ENCODE measurements at regions of chr19 and their contacts with region 1.

Region 1: DNA sequence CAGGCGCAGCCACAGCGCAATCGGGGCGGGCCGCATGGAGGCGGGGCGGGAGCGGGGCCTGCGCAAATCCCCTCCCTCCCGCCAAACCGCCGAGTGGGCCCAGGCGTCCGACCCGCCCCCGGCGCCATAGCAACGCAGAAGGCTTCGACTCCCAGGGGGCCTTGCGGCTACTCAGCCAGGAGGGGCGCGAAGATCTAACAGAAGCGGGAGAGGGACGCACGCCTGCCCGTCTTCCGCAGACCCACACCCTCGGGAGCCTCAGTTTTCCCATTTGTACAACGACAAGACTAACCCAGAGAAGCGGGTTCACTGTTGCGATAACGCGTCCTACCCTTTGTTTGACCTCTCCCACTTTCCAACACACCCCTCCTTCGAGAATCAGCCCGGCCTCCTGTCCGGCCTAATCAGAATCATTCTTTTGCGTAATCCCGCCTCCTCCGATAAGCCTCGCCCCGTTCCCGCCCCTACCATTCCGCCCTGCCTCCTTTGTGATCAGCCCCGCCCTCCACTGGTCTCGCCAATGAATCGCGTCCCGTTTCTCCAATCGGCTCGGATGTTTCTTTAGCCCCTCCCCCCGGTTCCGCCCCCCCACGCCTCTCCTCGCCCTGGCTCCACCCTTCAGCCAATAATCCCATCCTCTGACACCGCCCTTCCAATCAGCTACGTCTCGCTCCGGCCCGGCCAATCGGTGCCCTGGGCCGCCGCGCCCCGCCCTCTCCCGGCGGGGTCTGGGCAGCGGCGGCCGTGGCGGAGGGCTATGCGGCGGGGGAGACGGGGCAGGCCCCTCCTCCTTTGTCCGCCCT is at the start of gene PCSK4:
- DNase-seq: peak; percentile 84 to 99 (median 98)
- ATAC-seq: peak; percentile 93
- H3K4me3 ChIP-seq: peak within 1 kb of the TSS; percentile 77
- H3K4me3 Mint-ChIP-seq: peak within 1 kb of the TSS; percentile 83 to 94 (median 92)
- H3K27ac ChIP-seq: peak within 1 kb of the TSS; percentile 63
- H3K27ac Mint-ChIP-seq: peak within 1 kb of the TSS; percentile 83 to 96 (median 86)
- H3K4me1 ChIP-seq: peaks cover 9 to 10% of the 10 kb centered on the region in 2 donors
- H3K4me1 Mint-ChIP-seq: peaks cover 7 to 17% (median 15%) of the 10 kb centered on the region in 7 donors
- H3K27me3 ChIP-seq: no peaks in the 10 kb centered on the region
- H3K27me3 Mint-ChIP-seq: peaks cover 0 to 14% (median 0%) of the 10 kb centered on the region in 5 donors
- total RNA-seq, gene PCSK4: 0.87 to 10.8 (median 7.8) TPM

Region 2: DNA sequence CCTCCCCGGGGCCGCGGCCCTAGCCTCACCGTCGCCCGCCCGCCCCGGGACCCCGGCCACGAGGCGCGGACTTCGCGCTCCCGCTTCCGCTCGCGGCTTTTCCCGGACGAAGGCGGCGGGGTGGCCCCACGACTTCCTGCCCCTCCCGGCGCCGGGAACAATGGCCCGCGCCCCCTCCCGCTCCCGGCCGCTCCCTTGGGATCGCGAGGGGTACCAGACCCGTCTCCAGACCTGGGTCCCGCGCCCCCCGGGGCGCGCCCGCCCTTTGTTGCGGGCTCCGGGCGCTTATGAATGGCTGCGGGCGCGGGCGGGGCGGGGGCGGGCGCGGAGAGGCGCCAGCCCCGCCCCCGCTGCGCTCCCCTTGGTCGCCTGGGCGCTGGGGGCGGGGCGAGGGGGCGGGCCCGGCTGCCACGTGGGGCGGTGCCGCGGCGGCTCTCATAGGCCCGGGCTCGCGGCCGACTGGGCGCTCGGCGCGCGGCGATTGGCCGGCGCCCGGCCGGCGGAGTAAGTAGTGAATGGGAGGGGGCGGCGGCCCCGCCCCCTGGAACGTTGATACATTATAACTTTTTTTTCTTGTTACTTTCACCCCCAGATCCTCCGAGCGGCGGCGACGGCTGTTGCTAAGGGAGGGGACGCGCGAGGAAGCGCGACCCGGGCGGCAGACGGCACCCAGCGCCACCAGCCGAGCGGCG is 241.1 kb before region 1 on chr19:
- CTCF ChIA-PET with region 1: no interaction called
- POLR2A ChIA-PET with region 1: no interaction called
- intact Hi-C with region 1: loop called in 1 of 2 experiments (anchors 2 kb)
- DNase-seq: peak; percentile 88 to 97 (median 94)
- ATAC-seq: peak; percentile 74
- H3K4me3 ChIP-seq: peak overlapping the region; percentile 63
- H3K4me3 Mint-ChIP-seq: peak overlapping the region; percentile 80 to 95 (median 88)
- H3K27ac ChIP-seq: peak overlapping the region; percentile 94
- H3K27ac Mint-ChIP-seq: peak overlapping the region; percentile 62 to 95 (median 89)
- H3K4me1 ChIP-seq: peaks cover 22 to 27% of the 10 kb centered on the region in 2 donors
- H3K4me1 Mint-ChIP-seq: peaks cover 0 to 11% (median 10%) of the 10 kb centered on the region in 7 donors
- H3K27me3 ChIP-seq: no peaks in the 10 kb centered on the region
- H3K27me3 Mint-ChIP-seq: no peaks in the 10 kb centered on the region

Region 3: DNA sequence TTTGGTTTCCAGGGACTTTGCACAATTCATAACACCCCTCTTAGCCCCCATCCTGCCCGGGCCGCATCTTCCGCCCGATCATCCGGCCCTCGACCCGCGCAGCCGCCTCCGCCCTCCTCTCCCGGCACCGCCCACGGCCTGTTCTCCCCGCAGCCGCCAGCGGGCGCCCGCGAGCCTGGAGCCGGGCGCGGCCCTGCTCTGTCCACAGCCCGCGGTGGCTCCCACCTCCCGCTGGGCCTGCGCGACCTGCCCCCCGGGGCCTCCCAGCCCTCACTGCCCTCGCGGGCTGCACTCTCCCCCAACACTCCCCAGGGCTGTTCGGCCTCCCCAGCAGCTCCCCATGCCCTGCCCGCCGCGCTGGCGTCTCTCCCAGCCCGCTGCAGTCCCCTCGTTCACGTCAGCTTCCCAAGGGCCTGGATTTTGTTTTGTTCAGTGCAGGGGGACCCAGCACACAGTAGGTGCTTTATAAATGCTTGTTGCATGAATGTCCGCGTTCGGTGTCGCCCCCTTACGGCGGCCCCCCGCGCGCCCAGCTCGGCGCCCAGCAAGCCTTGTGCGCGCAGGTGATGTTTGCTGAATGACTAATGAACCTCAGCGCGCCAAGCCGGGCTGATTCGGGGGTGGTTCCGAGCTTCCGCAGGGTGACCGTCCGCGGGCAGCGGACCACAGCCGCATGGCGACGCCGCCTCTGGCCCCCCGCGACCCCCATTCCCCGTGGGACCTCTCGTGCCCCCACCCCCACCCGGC is 45.2 kb before region 1 on chr19:
- CTCF ChIA-PET with region 1: interaction called, 3 read pairs
- POLR2A ChIA-PET with region 1: no interaction called
- intact Hi-C with region 1: loop called in 1 of 2 experiments (anchors 1 kb)
- DNase-seq: peak; percentile 48 to 88 (median 71)
- ATAC-seq: peak; percentile 94
- H3K4me3 ChIP-seq: peak overlapping the region; percentile 50
- H3K4me3 Mint-ChIP-seq: peak overlapping the region; percentile 34 to 78 (median 64)
- H3K27ac ChIP-seq: no peak overlapping the region
- H3K27ac Mint-ChIP-seq: peak overlapping the region in 1 of 9 donors; percentile 5
- H3K4me1 ChIP-seq: peaks cover 5 to 9% of the 10 kb centered on the region in 2 donors
- H3K4me1 Mint-ChIP-seq: peaks cover 9 to 30% (median 15%) of the 10 kb centered on the region in 7 donors
- H3K27me3 ChIP-seq: peaks cover 12 to 27% of the 10 kb centered on the region in 2 donors
- H3K27me3 Mint-ChIP-seq: peaks cover 22 to 32% (median 25%) of the 10 kb centered on the region in 5 donors

Region 4: DNA sequence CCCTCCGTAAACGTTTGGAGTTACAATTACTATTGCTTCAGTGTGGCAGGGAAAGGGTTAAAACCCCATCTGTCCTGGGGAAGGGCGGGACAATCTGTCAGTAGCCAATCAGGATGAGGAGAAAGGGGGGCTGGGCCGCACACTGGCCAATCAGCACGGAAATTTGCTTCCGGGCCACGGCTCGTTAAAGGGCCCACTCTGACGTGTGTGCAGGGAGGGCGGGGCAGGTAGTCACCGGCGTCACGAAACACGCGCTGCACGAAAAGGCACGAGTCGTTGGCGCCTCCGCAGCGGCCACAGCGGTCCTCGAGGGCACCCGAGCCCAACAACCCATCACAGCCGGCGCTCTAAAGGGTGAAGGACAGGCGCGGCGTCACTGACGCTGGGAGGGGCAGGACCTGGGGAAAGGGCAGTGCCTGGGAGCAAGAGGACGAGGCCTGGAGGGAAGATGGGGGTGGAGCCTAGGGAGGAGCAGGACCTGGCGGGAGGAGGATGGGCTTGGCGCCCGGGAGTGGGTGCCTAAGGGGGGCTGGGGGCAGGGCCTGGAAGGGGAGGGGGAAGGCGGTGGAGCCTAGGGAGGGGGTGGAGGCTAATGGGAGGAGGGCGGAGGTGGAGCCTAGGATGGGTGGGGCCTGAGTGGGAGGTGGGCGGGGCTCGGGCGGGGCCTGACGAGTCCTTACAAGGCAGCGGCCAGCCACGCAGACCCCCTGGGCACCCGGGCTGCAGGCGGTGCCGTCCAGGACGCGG is 17.4 kb after region 1 on chr19:
- CTCF ChIA-PET with region 1: interaction called, 3 read pairs
- POLR2A ChIA-PET with region 1: interaction called, 3 read pairs
- intact Hi-C with region 1: loop called (anchors 1 kb)
- DNase-seq: peak; percentile 76 to 96 (median 94)
- ATAC-seq: peak; percentile 97
- H3K4me3 ChIP-seq: peak overlapping the region; percentile 48
- H3K4me3 Mint-ChIP-seq: peak overlapping the region; percentile 75 to 92 (median 86)
- H3K27ac ChIP-seq: peak overlapping the region; percentile 79
- H3K27ac Mint-ChIP-seq: peak overlapping the region; percentile 87 to 96 (median 92)
- H3K4me1 ChIP-seq: peaks cover 4 to 18% of the 10 kb centered on the region in 2 donors
- H3K4me1 Mint-ChIP-seq: peaks cover 7 to 41% (median 27%) of the 10 kb centered on the region in 7 donors
- H3K27me3 ChIP-seq: peaks cover 0 to 2% of the 10 kb centered on the region in 2 donors
- H3K27me3 Mint-ChIP-seq: peaks cover 0 to 41% (median 2%) of the 10 kb centered on the region in 5 donors

Region 5: GRCh38 chr19:1555487-1556389 is 65.2 kb after region 1 on chr19:
- CTCF ChIA-PET with region 1: no interaction called
- POLR2A ChIA-PET with region 1: no interaction called
- intact Hi-C with region 1: no loop called
- DNase-seq: no peak
- ATAC-seq: no peak
- H3K4me3 ChIP-seq: no peak overlapping the region
- H3K4me3 Mint-ChIP-seq: no peak overlapping the region
- H3K27ac ChIP-seq: no peak overlapping the region
- H3K27ac Mint-ChIP-seq: no peak overlapping the region
- H3K4me1 ChIP-seq: no peaks in the 10 kb centered on the region
- H3K4me1 Mint-ChIP-seq: peaks cover 0 to 4% (median 0%) of the 10 kb centered on the region in 7 donors
- H3K27me3 ChIP-seq: no peaks in the 10 kb centered on the region
- H3K27me3 Mint-ChIP-seq: peaks cover 0 to 11% (median 5%) of the 10 kb centered on the region in 5 donors

Region 6: DNA sequence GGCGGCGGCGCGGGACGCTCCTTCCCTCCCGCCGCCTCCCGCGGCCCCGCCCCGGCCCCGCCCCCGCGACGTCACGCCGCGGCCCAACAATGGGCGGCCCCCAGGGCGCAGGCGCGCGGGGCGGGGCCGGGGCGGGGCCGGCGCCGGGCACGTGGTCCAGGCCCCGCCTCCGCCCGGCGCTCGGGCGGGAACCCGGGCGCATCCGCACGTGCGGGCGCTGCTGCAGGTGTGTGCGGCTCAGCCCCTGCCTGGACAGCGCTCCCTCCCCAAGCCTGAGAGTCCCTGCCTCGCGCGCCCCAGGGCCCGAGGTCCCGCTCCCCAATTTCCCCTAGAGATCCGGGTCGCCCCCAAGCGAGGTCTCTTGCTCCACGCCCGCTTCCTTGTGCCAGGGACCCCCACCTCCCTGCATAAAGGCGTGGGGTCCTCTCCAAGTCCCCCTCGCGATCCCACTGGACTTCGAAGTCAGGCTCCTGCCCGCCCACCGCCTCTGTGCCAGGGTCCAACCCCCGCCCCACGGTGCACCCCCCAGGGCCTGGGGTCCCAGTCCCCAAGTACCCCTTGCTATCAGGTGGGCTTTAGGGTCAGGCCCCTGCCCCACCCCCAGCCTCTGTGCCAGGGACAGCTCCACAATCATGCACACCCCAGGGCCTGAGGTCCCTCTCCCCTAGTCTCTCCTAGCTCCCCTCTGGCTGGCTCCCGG is 78.0 kb after region 1 on chr19 and contains the start of gene MEX3D:
- CTCF ChIA-PET with region 1: no interaction called
- POLR2A ChIA-PET with region 1: no interaction called
- intact Hi-C with region 1: loop called in 1 of 2 experiments (anchors 1 kb)
- DNase-seq: peak; percentile 64 to 86 (median 81)
- ATAC-seq: peak; percentile 98
- H3K4me3 ChIP-seq: no peak within 1 kb of the TSS
- H3K4me3 Mint-ChIP-seq: peak within 1 kb of the TSS in 8 of 10 donors; percentile 3 to 78 (median 50)
- H3K27ac ChIP-seq: no peak within 1 kb of the TSS
- H3K27ac Mint-ChIP-seq: peak within 1 kb of the TSS in 1 of 9 donors; percentile 52
- H3K4me1 ChIP-seq: peaks cover 5 to 6% of the 10 kb centered on the region in 2 donors
- H3K4me1 Mint-ChIP-seq: peaks cover 0 to 8% (median 3%) of the 10 kb centered on the region in 7 donors
- H3K27me3 ChIP-seq: no peaks in the 10 kb centered on the region
- H3K27me3 Mint-ChIP-seq: peaks cover 0 to 32% (median 6%) of the 10 kb centered on the region in 5 donors
- total RNA-seq, gene MEX3D: 2.1 to 8.3 (median 2.3) TPM

Region 7: DNA sequence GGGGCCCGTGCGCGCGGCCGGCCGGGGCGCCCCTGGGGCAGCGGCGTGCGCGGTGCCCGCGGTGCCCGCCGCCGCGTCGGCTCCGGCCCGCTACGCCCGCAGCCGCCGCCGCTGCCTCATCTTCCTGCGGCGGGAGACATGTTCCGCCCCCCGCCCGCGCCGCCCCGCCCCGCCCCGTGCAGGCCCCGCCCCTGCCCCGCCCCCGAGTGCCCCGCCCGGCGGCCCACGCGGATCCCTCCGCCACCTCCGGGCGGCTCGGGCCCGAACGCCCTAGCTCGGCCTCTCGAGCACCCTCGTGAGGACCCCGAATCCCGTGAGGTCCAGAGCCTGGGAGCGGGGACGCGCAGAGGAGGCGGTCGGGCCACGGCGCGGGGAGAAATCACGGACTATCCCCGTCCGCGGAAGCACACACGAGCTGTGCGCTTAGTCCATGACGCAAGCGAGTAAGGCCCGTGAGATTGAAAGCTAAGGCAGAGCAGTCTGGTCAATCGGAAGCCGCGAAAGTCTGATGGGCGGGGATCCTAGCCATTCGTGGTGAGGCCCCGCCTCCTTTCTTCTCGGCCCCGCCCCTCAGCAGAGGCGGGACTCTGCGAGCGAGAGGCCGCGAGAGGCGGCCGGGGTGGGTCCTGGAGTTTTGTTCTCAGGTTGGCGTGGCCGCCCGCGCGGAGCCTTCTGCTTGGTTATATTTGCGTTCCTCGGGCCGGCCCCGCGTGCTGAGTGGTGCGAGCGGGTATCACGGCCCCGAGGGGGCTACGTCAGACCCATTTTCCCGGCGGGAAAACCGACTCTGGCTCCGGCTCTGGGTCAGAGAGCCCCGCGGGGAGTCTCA is 162.2 kb after region 1 on chr19 and contains the start of gene TCF3:
- CTCF ChIA-PET with region 1: no interaction called
- POLR2A ChIA-PET with region 1: interaction called, 3 read pairs
- intact Hi-C with region 1: loop called in 1 of 2 experiments (anchors 1 kb)
- DNase-seq: peak; percentile 96 to 100 (median 99)
- ATAC-seq: peak; percentile 96
- H3K4me3 ChIP-seq: peak within 1 kb of the TSS; percentile 86
- H3K4me3 Mint-ChIP-seq: peak within 1 kb of the TSS; percentile 86 to 96 (median 91)
- H3K27ac ChIP-seq: peak within 1 kb of the TSS; percentile 99
- H3K27ac Mint-ChIP-seq: peak within 1 kb of the TSS; percentile 87 to 98 (median 95)
- H3K4me1 ChIP-seq: peaks cover 4 to 8% of the 10 kb centered on the region in 2 donors
- H3K4me1 Mint-ChIP-seq: peaks cover 7 to 14% (median 10%) of the 10 kb centered on the region in 7 donors
- H3K27me3 ChIP-seq: no peaks in the 10 kb centered on the region
- H3K27me3 Mint-ChIP-seq: peaks cover 0 to 4% (median 0%) of the 10 kb centered on the region in 5 donors
- total RNA-seq, gene TCF3: 66.6 to 83.6 (median 78.3) TPM

Region 8: DNA sequence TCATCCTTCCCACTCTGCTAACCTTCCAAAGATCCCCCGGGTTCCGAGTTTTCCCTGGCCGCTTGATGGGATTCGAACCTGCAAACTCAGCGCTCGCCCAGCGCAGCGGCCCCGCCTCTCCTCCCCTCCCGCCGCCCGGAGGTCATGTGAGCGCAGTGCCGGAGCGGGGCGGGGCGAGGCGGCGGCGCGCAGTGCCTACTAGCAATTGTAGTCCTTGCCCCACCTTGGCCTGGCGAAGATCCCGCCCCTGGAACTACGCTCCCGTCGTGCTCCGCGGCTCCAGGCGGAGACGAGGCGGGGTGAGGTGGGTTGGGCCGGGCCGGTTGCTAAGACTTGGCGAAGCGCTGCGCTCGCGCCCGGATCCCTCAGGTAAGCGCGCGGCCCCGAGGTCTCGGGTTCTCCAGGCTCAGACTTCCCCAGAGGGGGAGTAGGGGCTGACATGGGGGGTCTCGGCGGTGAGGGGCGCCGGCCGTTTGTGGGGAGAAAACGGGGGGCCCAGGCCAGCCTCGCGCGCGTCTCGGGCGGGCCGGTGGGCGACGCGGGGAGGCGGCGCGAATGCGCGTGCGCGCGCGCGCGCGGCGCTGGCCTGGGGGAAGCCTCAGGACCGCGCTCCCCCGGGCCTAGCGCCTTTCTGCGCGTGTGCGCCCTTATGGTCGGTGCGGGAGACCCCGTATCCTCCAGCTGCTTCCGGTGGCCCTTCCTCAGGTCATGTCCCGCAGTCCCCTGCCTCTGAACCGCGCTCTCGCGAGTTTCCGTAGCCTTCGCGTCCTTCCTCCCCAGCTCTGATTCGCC is 414.8 kb after region 1 on chr19 and contains the starts of genes ADAT3 and SCAMP4:
- CTCF ChIA-PET with region 1: no interaction called
- POLR2A ChIA-PET with region 1: no interaction called
- intact Hi-C with region 1: loop called in 1 of 2 experiments (anchors 1 kb)
- DNase-seq: peak; percentile 90 to 98 (median 97)
- ATAC-seq: peak; percentile 98
- H3K4me3 ChIP-seq: peak within 1 kb of the TSS; percentile 70
- H3K4me3 Mint-ChIP-seq: peak within 1 kb of the TSS; percentile 88 to 96 (median 92)
- H3K27ac ChIP-seq: peak within 1 kb of the TSS; percentile 75
- H3K27ac Mint-ChIP-seq: peak within 1 kb of the TSS; percentile 67 to 96 (median 92)
- H3K4me1 ChIP-seq: peaks cover 10% of the 10 kb centered on the region in 2 donors
- H3K4me1 Mint-ChIP-seq: peaks cover 13 to 57% (median 39%) of the 10 kb centered on the region in 7 donors
- H3K27me3 ChIP-seq: no peaks in the 10 kb centered on the region
- H3K27me3 Mint-ChIP-seq: no peaks in the 10 kb centered on the region
- total RNA-seq, gene ADAT3: 3.5 to 13.5 (median 6.1) TPM
- total RNA-seq, gene SCAMP4: 17.6 to 35.5 (median 23.0) TPM